ENCODE measurements at regions of chr2 and their contacts with region 1.

Region 1: DNA sequence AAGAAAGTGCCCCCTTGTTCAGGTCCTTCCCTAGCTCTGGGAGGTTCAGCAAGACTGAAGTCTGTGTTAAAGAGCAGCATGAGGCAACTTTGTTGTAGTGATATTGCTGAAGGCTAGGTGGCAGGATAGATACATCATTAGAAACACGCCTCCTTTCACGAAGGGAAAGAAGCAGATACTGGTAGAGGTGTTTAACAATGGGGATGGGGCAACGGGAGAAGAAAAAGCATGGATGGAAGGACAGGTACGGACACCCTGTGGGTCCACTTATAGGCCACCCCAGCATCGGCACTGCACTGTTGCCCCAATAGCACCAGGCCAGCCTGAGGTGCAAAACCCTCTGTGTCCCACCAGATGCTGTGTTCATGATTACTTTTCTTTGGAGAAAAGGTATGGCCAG is 3.5 kb upstream of the IGFBP5 start:
- DNase-seq: no peak
- H3K4me3 ChIP-seq: no peak overlapping the region
- H3K27ac ChIP-seq: peak overlapping the region in 1 of 3 donors; percentile 11
- H3K4me1 ChIP-seq: peaks cover 36 to 62% of the 10 kb centered on the region in 2 donors
- H3K27me3 ChIP-seq: no peaks in the 10 kb centered on the region
- CTCF ChIP-seq: peak in 5 of 6 experiments; percentile 37 to 82 (median 79)
- POLR2A ChIP-seq: no peak

Region 2: DNA sequence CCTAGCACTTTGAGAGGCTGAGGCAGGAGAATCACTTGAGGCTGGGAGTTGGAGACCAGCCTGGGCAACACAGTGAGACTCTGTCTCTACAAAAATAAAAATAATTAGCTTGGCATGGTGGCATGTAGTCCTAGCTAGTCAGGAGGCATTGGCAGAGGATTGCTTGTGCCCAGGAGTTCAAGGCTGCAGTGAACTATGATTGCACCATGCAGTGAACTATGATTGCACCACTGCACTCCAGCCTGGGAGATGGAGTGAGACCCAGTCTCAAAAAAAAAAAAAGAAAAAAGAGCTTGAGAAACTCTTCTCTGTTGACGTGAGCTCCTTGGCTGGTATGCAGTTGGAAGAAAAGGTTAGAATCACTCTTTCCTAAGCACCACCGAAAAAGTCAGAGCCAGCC is 286.0 kb after region 1 on chr2:
- intact Hi-C with region 1: loop called (anchors 5 kb)
- DNase-seq: no peak
- H3K4me3 ChIP-seq: no peak overlapping the region
- H3K27ac ChIP-seq: no peak overlapping the region
- H3K4me1 ChIP-seq: peaks cover 9 to 14% of the 10 kb centered on the region in 2 donors
- H3K27me3 ChIP-seq: no peaks in the 10 kb centered on the region
- CTCF ChIP-seq: no peak
- POLR2A ChIP-seq: no peak

Region 3: GRCh38 chr2:217166241-217166850 is 467.5 kb after region 1 on chr2:
- intact Hi-C with region 1: loop called (anchors 10 kb)
- DNase-seq: no peak
- H3K4me3 ChIP-seq: no peak overlapping the region
- H3K27ac ChIP-seq: no peak overlapping the region
- H3K4me1 ChIP-seq: peaks cover 6 to 8% of the 10 kb centered on the region in 2 donors
- H3K27me3 ChIP-seq: no peaks in the 10 kb centered on the region
- CTCF ChIP-seq: peak; percentile 30 to 67 (median 56)
- POLR2A ChIP-seq: no peak

Region 4: GRCh38 chr2:217360781-217361482 is 662.0 kb after region 1 on chr2:
- intact Hi-C with region 1: loop called (anchors 10 kb)
- DNase-seq: peak; percentile 93
- H3K4me3 ChIP-seq: no peak overlapping the region
- H3K27ac ChIP-seq: peak overlapping the region; percentile 91 to 98 (median 97)
- H3K4me1 ChIP-seq: peaks cover 68 to 82% of the 10 kb centered on the region in 2 donors
- H3K27me3 ChIP-seq: no peaks in the 10 kb centered on the region
- CTCF ChIP-seq: peak in 1 of 6 experiments; percentile 37
- POLR2A ChIP-seq: no peak

Region 5: GRCh38 chr2:217510771-217511291 is 811.9 kb after region 1 on chr2:
- intact Hi-C with region 1: loop called (anchors 5 kb)
- DNase-seq: peak; percentile 79 to 81
- H3K4me3 ChIP-seq: no peak overlapping the region
- H3K27ac ChIP-seq: no peak overlapping the region
- H3K4me1 ChIP-seq: peaks cover 12 to 14% of the 10 kb centered on the region in 2 donors
- H3K27me3 ChIP-seq: no peaks in the 10 kb centered on the region
- CTCF ChIP-seq: peak; percentile 22 to 99 (median 76)
- POLR2A ChIP-seq: no peak

Measured in thyroid gland (tissue), 4 donors.